ENCODE measurements at regions of chr5 and their contacts with region 1.

Region 1: GRCh38 chr5:151740336-151740942 is 18.0 kb downstream of the ATOX1 start:
- DNase-seq: peak; percentile 80
- H3K4me3 Mint-ChIP-seq: peak overlapping the region; percentile 45
- H3K27ac Mint-ChIP-seq: peak overlapping the region; percentile 86
- H3K4me1 Mint-ChIP-seq: peaks cover 55% of the 10 kb centered on the region
- H3K27me3 Mint-ChIP-seq: no peaks in the 10 kb centered on the region
- CTCF ChIP-seq: peak; percentile 93

Region 2: DNA sequence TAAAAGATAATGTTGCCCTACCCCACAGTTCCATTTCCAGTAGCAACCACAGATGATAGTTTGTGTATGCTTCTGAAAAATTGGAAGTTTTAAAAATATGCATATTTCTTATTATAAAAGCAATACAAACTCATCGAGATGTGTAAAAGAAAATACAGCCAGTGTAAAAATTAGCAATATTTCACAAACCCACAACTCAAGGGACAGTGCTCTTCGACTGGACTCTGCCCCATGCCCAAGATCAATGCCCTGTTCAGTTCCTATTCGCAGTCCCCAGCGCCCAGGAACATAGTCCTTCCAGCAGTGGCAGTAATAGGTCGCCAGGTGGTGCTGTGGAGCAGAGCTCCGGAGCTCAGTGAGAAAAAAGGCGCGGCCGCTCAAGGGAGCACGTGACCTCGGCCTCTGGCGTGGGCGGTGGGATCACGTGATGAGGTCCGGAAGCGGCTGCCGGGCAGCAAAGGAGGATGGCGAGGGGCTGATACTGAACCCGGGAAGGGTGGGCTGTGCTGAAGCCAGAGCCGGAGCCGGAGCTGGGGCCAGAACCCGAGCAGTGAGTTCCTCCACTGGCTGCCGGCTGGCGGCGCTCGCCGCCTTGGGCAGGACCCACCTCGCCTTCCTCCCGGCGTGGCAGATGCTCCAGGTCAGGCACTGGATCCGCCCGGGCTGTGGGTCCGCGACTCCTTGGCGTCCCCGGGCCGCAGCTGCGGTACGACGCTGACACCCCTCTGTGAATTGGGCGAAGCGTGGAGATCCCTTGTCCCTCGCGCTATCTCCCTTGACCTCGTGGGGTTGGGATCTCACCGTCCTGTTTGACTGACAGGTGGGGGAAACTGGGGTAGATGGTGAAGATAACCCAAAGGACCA is 293.0 kb before region 1 on chr5 and contains the start of gene SLC36A1:
- CTCF ChIA-PET with region 1: interaction called, 42 read pairs
- POLR2A ChIA-PET with region 1: interaction called, 3 read pairs
- intact Hi-C with region 1: loop called (anchors 1 kb)
- DNase-seq: peak; percentile 97
- H3K4me3 Mint-ChIP-seq: peak within 1 kb of the TSS; percentile 77
- H3K27ac Mint-ChIP-seq: peak within 1 kb of the TSS; percentile 66
- H3K4me1 Mint-ChIP-seq: peaks cover 19% of the 10 kb centered on the region
- H3K27me3 Mint-ChIP-seq: peaks cover 28% of the 10 kb centered on the region
- CTCF ChIP-seq: peak; percentile 97
- total RNA-seq, gene SLC36A1: 10.4 and 16.2 TPM in 2 replicates

Region 3: DNA sequence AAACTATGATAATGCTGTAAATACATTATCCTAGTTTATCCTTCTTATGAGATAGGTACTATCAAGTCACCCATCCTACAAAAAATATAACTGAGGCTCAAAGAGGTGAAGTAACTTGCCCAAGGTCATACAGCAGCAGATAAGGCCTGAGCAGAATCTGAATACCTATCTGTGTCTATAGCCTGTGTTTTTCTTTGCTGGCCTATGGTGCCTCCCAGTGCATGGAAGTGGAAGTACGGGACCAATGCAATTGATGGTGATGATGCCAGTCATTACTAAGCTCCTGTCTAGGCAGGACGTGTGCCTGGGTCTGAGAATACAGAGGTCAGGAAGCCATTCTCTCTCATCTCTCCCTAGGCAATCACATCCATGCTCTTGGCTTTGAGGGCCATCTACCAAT is 217.1 kb before region 1 on chr5:
- CTCF ChIA-PET with region 1: interaction called, 6 read pairs
- POLR2A ChIA-PET with region 1: no interaction called
- intact Hi-C with region 1: loop called (anchors 2 kb)
- DNase-seq: peak; percentile 71
- H3K4me3 Mint-ChIP-seq: no peak overlapping the region
- H3K27ac Mint-ChIP-seq: no peak overlapping the region
- H3K4me1 Mint-ChIP-seq: peaks cover 2% of the 10 kb centered on the region
- H3K27me3 Mint-ChIP-seq: no peaks in the 10 kb centered on the region
- CTCF ChIP-seq: peak; percentile 84

Region 4: GRCh38 chr5:151684690-151685361 is 55.6 kb before region 1 on chr5:
- CTCF ChIA-PET with region 1: interaction called, 42 read pairs
- POLR2A ChIA-PET with region 1: interaction called, 3 read pairs
- intact Hi-C with region 1: no loop called
- DNase-seq: peak; percentile 88
- H3K4me3 Mint-ChIP-seq: peak overlapping the region; percentile 26
- H3K27ac Mint-ChIP-seq: peak overlapping the region; percentile 84
- H3K4me1 Mint-ChIP-seq: peaks cover 45% of the 10 kb centered on the region
- H3K27me3 Mint-ChIP-seq: no peaks in the 10 kb centered on the region
- CTCF ChIP-seq: peak; percentile 25

Region 5: DNA sequence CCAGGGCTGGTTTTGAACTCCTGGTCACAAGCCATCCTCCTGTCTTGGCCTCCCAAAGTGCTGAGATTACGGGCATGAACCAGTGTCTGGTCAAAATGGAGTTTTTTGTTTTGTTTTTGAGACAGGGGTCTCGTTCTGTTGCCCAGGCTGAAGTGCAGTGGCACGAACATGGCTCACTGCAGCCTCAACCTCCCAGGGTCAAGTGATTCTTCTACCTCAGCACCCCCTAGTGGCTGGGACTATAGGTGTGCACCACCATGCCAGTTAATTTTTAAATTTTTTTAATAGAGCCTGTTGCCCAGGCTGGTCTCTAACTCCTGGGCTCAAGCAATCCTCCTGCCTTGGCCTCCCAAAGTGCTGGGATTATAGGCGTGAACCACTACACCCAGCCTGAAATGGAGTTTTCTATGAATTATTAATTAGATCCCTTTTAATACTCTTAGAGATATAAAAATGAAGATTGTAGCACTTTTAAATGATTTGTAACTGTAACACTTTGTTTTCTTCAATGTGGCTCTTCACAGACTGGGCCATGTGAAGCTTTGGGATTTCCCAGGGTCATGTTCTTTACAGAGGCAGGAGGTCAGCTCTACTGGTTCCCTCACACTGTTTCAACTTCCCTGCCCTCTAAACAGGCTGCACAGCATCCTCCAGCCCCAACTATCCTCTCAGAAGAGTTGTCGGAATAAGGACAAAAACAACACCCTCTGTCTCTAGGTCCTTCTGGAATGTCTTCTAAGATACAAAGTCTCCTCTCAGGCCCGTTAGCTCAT is 21.0 kb before region 1 on chr5:
- CTCF ChIA-PET with region 1: interaction called, 71 read pairs
- POLR2A ChIA-PET with region 1: interaction called, 3 read pairs
- intact Hi-C with region 1: no loop called
- DNase-seq: peak; percentile 82
- H3K4me3 Mint-ChIP-seq: no peak overlapping the region
- H3K27ac Mint-ChIP-seq: no peak overlapping the region
- H3K4me1 Mint-ChIP-seq: no peaks in the 10 kb centered on the region
- H3K27me3 Mint-ChIP-seq: no peaks in the 10 kb centered on the region
- CTCF ChIP-seq: peak; percentile 72

Region 6: DNA sequence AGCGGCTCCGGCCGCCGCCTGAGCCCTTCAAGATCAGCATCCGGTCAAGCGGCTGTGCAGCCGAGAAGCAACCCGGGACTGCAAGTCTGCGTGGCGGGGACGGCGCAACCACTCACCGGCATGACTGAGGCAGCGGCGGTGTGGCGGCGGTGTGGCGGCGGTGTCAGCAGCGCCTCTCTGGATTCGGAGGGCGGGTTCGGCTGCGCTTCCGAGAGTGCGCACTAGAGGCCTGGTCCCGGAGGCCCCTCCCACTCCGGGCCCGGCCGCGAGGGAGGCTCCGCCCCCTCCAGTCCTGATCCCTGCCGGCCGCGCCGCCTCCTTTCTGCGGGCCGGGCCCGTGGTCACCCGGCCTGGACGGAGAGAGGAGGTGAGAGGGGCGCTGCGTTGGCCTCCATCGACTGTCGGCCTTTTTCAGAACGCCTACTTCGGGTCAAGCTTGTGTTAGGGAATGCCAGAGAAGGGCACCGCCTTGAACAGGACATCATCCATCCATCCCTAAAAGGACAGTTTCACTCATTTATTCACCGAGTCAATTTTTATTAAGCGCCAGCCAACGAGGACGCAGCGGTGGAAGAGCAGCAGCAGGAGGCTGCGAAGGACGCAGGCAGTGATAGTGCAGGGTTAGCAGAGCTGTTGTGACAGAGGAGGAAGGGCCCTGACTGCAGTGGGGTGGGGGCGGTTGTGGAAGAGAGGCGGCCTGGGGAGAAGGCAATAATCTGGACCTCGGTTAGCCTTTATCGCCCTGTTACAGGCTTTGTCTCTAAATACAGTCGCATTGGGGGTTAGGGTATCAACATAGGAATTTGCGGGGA is 18.2 kb after region 1 on chr5 and contains the start of gene ATOX1:
- CTCF ChIA-PET with region 1: interaction called, 159 read pairs
- POLR2A ChIA-PET with region 1: interaction called, 29 read pairs
- intact Hi-C with region 1: no loop called
- DNase-seq: peak; percentile 96
- H3K4me3 Mint-ChIP-seq: peak within 1 kb of the TSS; percentile 85
- H3K27ac Mint-ChIP-seq: peak within 1 kb of the TSS; percentile 90
- H3K4me1 Mint-ChIP-seq: peaks cover 29% of the 10 kb centered on the region
- H3K27me3 Mint-ChIP-seq: no peaks in the 10 kb centered on the region
- CTCF ChIP-seq: no peak
- total RNA-seq, gene ATOX1: 155 and 168 TPM in 2 replicates

Measured in MCF 10A (cell line).